Endothelial cell of umbilical vein (primary cell): ENCODE measurements at regions of chr16 and their contacts with region 1.

Region 1: DNA sequence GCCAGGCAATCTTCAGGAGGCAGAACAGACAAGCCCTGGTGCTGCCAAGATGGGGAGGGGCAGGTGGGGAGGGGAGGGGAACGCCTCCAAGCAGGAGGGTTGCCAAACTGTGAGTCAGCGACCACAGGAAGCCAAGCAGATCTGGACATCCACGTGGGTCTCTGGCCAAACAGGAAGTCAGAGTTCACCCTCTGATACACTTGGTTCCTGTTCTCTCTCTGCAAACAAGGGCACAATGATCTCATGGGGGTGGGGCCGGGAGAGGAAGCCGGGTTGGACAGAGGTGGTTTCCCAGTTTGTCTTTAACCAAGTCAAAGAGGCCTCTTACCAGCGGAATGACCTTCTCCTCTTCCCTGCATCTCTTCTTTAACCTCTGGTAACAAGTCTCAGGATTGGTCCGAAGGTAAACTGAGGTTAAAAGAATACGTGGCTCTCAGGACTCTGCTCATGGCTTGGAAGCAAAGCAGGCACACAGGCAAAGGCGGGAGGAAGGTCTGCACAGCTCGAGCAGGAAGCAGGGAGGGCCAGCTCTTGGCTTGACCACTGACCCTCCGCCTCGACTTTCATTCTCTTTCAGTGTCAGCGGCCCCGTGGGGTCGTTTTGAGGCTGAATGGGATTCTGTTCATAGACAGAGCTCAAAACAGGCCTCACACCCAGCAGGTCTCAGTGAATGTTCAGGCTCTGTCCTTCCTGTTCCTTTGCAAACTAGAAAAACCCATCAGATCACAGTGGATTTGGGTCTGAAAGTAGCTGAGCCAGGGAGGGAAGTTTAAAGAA is 32.9 kb downstream of the TK2 start:
- DNase-seq: peak; percentile 100
- H3K4me3 ChIP-seq: peak overlapping the region in 1 of 3 experiments; percentile 0
- H3K27ac ChIP-seq: peak overlapping the region; percentile 97
- H3K4me1 ChIP-seq: peaks cover 81% of the 10 kb centered on the region
- H3K27me3 ChIP-seq: no peaks in the 10 kb centered on the region
- CTCF ChIP-seq: no peak
- POLR2A ChIP-seq: peak; percentile 83

Region 2: GRCh38 chr16:66382171-66382965 is 134.6 kb before region 1 on chr16:
- CTCF ChIA-PET with region 1: interaction called, 3 read pairs
- POLR2A ChIA-PET with region 1: no interaction called
- dilution Hi-C with region 1: no loop called
- intact Hi-C with region 1: loop called (anchors 1 kb)
- DNase-seq: peak; percentile 98
- H3K4me3 ChIP-seq: peak overlapping the region in 1 of 3 experiments; percentile 29
- H3K27ac ChIP-seq: peak overlapping the region; percentile 100
- H3K4me1 ChIP-seq: peaks cover 59% of the 10 kb centered on the region
- H3K27me3 ChIP-seq: no peaks in the 10 kb centered on the region
- CTCF ChIP-seq: peak; percentile 35 to 43
- POLR2A ChIP-seq: peak; percentile 27

Region 3: DNA sequence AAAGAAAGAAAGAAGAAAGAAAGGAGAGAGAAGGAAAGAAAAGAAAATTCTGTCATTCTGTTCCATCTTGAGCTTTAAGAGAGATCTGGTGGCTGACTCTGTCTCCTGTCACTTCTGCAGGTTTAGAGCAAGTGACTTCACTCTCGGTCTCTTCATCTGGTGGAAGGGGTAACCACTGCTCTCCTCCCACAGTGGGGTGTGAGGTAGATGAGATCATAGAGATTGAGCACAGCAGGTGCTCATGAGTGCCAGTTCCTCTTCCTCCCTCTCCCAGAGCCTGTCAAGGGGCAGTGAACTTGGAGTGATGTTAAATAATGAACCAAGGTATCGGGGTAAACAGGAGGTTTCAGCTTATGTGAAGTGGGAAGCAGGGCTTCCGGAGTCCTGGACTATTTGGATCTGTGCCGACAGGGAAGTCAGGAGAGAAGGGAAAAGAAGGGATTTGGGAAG is 42.2 kb before region 1 on chr16:
- CTCF ChIA-PET with region 1: interaction called, 18 read pairs
- POLR2A ChIA-PET with region 1: interaction called, 3 read pairs
- dilution Hi-C with region 1: no loop called
- intact Hi-C with region 1: loop called (anchors 1 kb)
- DNase-seq: peak; percentile 31
- H3K4me3 ChIP-seq: no peak overlapping the region
- H3K27ac ChIP-seq: no peak overlapping the region
- H3K4me1 ChIP-seq: peaks cover 5% of the 10 kb centered on the region
- H3K27me3 ChIP-seq: peaks cover 0 to 8% of the 10 kb centered on the region in 2 experiments
- CTCF ChIP-seq: no peak
- POLR2A ChIP-seq: no peak

Region 4: DNA sequence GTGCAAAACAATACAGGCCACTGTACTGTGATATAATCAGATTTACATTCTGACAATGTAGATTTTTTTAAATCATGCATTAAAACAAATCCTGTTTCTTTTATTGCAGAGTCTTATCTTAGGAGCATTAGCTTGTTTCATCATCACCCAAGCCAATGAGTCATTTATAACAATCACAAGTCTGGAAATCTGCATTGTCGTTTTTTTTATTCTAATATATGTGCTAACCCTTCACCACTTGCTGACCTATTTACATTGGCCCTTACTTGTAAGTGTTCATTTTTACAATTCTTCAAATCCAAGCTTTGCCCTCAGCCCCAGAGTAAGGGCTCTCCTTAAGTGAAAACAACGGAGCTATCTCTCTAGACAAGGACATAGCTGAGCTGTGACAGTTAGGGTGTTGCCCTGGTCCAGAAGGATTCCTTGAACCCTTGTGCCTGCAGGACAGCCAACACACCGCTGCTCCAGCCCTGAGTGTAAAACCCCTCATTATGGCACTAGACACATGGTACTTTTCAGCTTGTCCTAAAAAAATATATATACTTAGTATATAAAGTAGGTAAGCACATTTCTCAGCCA is 52.9 kb after region 1 on chr16:
- CTCF ChIA-PET with region 1: interaction called, 8 read pairs
- POLR2A ChIA-PET with region 1: no interaction called
- dilution Hi-C with region 1: no loop called
- intact Hi-C with region 1: loop called (anchors 5 kb)
- DNase-seq: peak; percentile 76
- H3K4me3 ChIP-seq: no peak overlapping the region
- H3K27ac ChIP-seq: peak overlapping the region; percentile 79
- H3K4me1 ChIP-seq: peaks cover 34% of the 10 kb centered on the region
- H3K27me3 ChIP-seq: no peaks in the 10 kb centered on the region
- CTCF ChIP-seq: no peak
- POLR2A ChIP-seq: no peak

Region 5: DNA sequence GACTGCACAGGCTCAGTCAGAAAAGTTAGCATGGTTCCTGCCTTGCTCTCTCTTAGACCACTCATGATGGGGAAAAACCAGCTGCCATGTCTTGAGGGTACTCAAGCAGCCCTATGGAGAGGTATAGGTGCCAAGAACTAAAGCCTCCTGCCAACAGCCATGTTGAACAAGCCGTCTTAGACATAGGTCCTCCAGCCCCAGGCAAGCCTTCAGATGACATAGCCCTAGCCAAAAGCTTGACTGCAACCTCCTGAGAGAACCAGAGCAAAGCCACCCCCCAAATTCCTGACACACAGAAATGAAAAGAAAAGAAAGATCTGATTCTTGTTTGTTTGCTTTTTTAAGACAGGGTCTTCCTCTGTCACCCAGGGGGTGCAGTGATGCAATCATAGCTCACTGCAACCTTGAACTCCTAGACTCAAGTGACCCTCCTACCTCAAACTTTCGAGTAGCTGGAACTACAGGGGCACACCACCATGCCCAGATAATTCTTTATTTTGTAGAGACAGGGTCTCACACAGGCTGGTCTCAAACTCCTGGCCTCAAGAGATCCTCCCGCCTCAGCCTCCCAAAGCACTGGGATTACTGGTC is 123.8 kb after region 1 on chr16:
- CTCF ChIA-PET with region 1: no interaction called
- POLR2A ChIA-PET with region 1: no interaction called
- dilution Hi-C with region 1: no loop called
- intact Hi-C with region 1: no loop called
- DNase-seq: no peak
- H3K4me3 ChIP-seq: no peak overlapping the region
- H3K27ac ChIP-seq: no peak overlapping the region
- H3K4me1 ChIP-seq: no peaks in the 10 kb centered on the region
- H3K27me3 ChIP-seq: no peaks in the 10 kb centered on the region
- CTCF ChIP-seq: no peak
- POLR2A ChIP-seq: no peak